ENCODE measurements at regions of chr3 and their contacts with region 1.

Region 1: GRCh38 chr3:46866720-46867549 is 3.7 kb upstream of the MYL3 start:
- DNase-seq: peak; percentile 84
- H3K4me3 ChIP-seq: no peak overlapping the region
- H3K27ac ChIP-seq: no peak overlapping the region
- H3K4me1 ChIP-seq: no peaks in the 10 kb centered on the region
- H3K27me3 ChIP-seq: no peaks in the 10 kb centered on the region
- CTCF ChIP-seq: peak; percentile 93

Region 2: GRCh38 chr3:46909535-46910442 is 42.9 kb after region 1 on chr3:
- intact Hi-C with region 1: loop called (anchors 5 kb)
- DNase-seq: peak; percentile 85
- H3K4me3 ChIP-seq: no peak overlapping the region
- H3K27ac ChIP-seq: no peak overlapping the region
- H3K4me1 ChIP-seq: peaks cover 8% of the 10 kb centered on the region
- H3K27me3 ChIP-seq: no peaks in the 10 kb centered on the region
- CTCF ChIP-seq: peak; percentile 80